Heart left ventricle (tissue), 16 donors: ENCODE measurements at regions of chr11 and their contacts with region 1.

Region 1: GRCh38 chr11:124758317-124759203 is 3.5 kb downstream of the ESAM start:
- DNase-seq: peak; percentile 73 to 90 (median 78)
- ATAC-seq: peak; percentile 38 to 57 (median 54)
- H3K4me3 ChIP-seq: peak overlapping the region; percentile 25 to 95 (median 76)
- H3K27ac ChIP-seq: peak overlapping the region; percentile 69 to 99 (median 94)
- H3K4me1 ChIP-seq: peaks cover 0 to 83% (median 58%) of the 10 kb centered on the region in 12 donors
- H3K27me3 ChIP-seq: peaks cover 0 to 64% (median 36%) of the 10 kb centered on the region in 9 donors
- CTCF ChIP-seq: peak; percentile 50 to 77 (median 71)
- POLR2A ChIP-seq: no peak

Region 2: GRCh38 chr11:124693142-124693541 is 65.4 kb before region 1 on chr11:
- intact Hi-C with region 1: no loop called
- DNase-seq: no peak
- ATAC-seq: no peak
- H3K4me3 ChIP-seq: no peak overlapping the region
- H3K27ac ChIP-seq: no peak overlapping the region
- H3K4me1 ChIP-seq: no peaks in the 10 kb centered on the region
- H3K27me3 ChIP-seq: no peaks in the 10 kb centered on the region
- CTCF ChIP-seq: no peak
- POLR2A ChIP-seq: no peak

Region 3: GRCh38 chr11:124707829-124708228 is 50.7 kb before region 1 on chr11:
- intact Hi-C with region 1: no loop called
- DNase-seq: no peak
- ATAC-seq: no peak
- H3K4me3 ChIP-seq: no peak overlapping the region
- H3K27ac ChIP-seq: no peak overlapping the region
- H3K4me1 ChIP-seq: no peaks in the 10 kb centered on the region
- H3K27me3 ChIP-seq: peaks cover 0 to 7% (median 0%) of the 10 kb centered on the region in 9 donors
- CTCF ChIP-seq: no peak
- POLR2A ChIP-seq: no peak

Region 4: GRCh38 chr11:124717786-124718651 is 40.5 kb before region 1 on chr11:
- intact Hi-C with region 1: loop called in 1 of 10 experiments (anchors 2 kb)
- DNase-seq: peak in 4 of 5 donors; percentile 38 to 81 (median 64)
- ATAC-seq: peak; percentile 48 to 72 (median 60)
- H3K4me3 ChIP-seq: peak overlapping the region; percentile 3 to 58 (median 49)
- H3K27ac ChIP-seq: peak overlapping the region in 11 of 12 donors; percentile 8 to 74 (median 31)
- H3K4me1 ChIP-seq: peaks cover 0 to 32% (median 13%) of the 10 kb centered on the region in 12 donors
- H3K27me3 ChIP-seq: peaks cover 0 to 48% (median 25%) of the 10 kb centered on the region in 9 donors
- CTCF ChIP-seq: no peak
- POLR2A ChIP-seq: no peak

Region 5: DNA sequence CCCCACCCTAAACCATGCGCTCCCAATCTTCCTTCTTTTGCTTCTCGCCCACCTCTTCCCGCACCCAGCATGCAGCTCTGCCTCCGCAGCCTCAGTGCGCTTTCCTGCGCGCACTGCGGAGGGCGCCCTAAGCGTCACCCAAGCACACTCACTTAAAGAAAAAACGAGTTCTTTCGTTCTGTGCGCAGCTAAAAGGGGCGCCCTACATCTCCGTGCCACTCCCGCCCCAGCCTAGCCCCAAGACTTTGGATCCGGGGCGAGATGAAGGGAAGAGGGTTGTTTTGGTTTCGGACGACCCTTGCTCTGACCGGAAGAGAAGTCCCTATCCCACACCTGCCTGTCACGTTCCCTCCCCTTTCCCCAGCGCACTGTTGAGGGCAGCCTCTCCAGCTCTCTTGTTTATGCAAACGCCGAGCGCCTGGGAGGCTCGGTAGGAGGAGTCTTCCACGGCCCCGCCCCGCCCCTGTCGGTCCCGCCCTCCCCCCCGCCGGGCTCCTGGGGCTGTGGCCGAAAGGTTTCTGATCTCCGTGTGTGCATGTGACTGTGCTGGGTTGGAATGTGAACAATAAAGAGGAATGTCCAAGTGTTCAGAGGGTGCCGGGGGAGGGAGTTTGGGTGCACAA is 11.8 kb before region 1 on chr11:
- intact Hi-C with region 1: loop called in 2 of 10 experiments (anchors 2 kb)
- DNase-seq: peak; percentile 69 to 89 (median 76)
- ATAC-seq: peak; percentile 63 to 88 (median 84)
- H3K4me3 ChIP-seq: peak overlapping the region; percentile 22 to 65 (median 50)
- H3K27ac ChIP-seq: peak overlapping the region in 10 of 12 donors; percentile 9 to 71 (median 57)
- H3K4me1 ChIP-seq: peaks cover 0 to 58% (median 34%) of the 10 kb centered on the region in 12 donors
- H3K27me3 ChIP-seq: peaks cover 15 to 76% (median 30%) of the 10 kb centered on the region in 9 donors
- CTCF ChIP-seq: peak in 11 of 12 donors; percentile 16 to 52 (median 36)
- POLR2A ChIP-seq: peak in 1 of 2 donors; percentile 48

Region 6: GRCh38 chr11:124800226-124800929 is 41.8 kb after region 1 on chr11 and contains the start of gene MSANTD2:
- intact Hi-C with region 1: loop called in 2 of 10 experiments (anchors 5 kb)
- DNase-seq: peak; percentile 83 to 91 (median 87)
- ATAC-seq: peak; percentile 91 to 98 (median 98)
- H3K4me3 ChIP-seq: peak within 1 kb of the TSS; percentile 71 to 94 (median 88)
- H3K27ac ChIP-seq: peak within 1 kb of the TSS; percentile 90 to 100 (median 98)
- H3K4me1 ChIP-seq: peaks cover 3 to 38% (median 32%) of the 10 kb centered on the region in 12 donors
- H3K27me3 ChIP-seq: no peaks in the 10 kb centered on the region
- CTCF ChIP-seq: peak in 1 of 12 donors; percentile 20
- POLR2A ChIP-seq: peak in 1 of 2 donors; percentile 86
- total RNA-seq, gene MSANTD2: 2.2 to 5.4 (median 3.1) TPM

Region 7: GRCh38 chr11:124837491-124837856 is 78.9 kb after region 1 on chr11:
- intact Hi-C with region 1: loop called in 6 of 10 experiments (anchors 2 to 10 kb)
- DNase-seq: peak in 1 of 5 donors; percentile 26
- ATAC-seq: peak in 3 of 4 donors; percentile 53 to 71 (median 69)
- H3K4me3 ChIP-seq: no peak overlapping the region
- H3K27ac ChIP-seq: no peak overlapping the region
- H3K4me1 ChIP-seq: peaks cover 6 to 20% (median 15%) of the 10 kb centered on the region in 12 donors
- H3K27me3 ChIP-seq: peaks cover 23 to 70% (median 45%) of the 10 kb centered on the region in 9 donors
- CTCF ChIP-seq: peak in 1 of 12 donors; percentile 20
- POLR2A ChIP-seq: no peak

Region 8: GRCh38 chr11:124875943-124876817 is 117.6 kb after region 1 on chr11:
- intact Hi-C with region 1: loop called in 1 of 10 experiments (anchors 5 kb)
- DNase-seq: peak; percentile 89 to 91 (median 89)
- ATAC-seq: peak; percentile 79 to 92 (median 90)
- H3K4me3 ChIP-seq: peak overlapping the region; percentile 1 to 82 (median 60)
- H3K27ac ChIP-seq: peak overlapping the region; percentile 70 to 98 (median 88)
- H3K4me1 ChIP-seq: peaks cover 0 to 31% (median 20%) of the 10 kb centered on the region in 12 donors
- H3K27me3 ChIP-seq: peaks cover 0 to 51% (median 14%) of the 10 kb centered on the region in 9 donors
- CTCF ChIP-seq: peak; percentile 47 to 92 (median 76)
- POLR2A ChIP-seq: no peak